ENCODE measurements at regions of chr1 and their contacts with region 1.

Region 1: DNA sequence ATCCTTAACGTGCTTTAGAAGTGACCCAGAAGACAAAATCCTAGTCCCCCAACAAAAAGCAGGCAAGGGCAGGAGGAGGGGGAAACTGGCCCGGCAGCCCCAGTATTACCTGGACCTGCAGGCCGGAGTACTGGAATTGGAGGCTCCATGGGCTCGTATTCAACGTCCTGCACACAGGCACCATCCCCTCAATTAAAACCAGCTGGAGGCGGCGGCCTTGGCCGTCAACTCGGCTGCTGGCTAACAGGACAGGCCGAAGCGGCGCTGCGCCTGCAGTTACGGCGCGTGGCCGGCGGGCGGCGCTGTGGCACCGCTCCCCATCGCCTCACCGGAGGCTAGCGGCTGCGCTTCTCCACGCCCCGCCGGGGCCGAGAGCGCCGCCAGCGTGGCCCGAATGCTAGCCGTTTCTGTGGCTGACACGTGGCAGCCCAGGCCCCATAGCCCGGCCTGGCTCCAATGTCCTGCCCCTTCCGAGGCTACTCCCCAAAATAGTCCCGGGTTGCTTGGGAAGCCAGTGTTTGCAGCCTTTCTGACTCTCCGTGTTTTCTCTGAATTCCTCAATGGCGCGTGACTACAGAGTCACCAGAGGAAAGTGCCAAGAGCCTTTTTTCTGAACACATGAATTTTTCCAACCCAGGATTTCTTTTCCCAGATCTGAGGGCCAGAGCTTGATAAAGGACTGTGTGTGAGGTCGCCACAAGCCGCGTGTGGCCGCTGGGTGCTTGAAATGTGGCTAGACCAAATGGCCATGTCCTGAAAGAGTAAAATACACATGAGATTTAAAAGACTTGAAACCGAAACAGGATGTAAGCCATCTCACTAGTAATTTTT is 82.5 kb downstream of the HHIPL2 start:
- DNase-seq: peak; percentile 84
- ATAC-seq: peak; percentile 96
- H3K4me3 Mint-ChIP-seq: peak overlapping the region; percentile 77
- H3K27ac Mint-ChIP-seq: peak overlapping the region; percentile 80
- H3K4me1 Mint-ChIP-seq: peaks cover 12% of the 10 kb centered on the region
- H3K27me3 Mint-ChIP-seq: peaks cover 9% of the 10 kb centered on the region

Region 2: GRCh38 chr1:222455188-222455879 is 10.1 kb before region 1 on chr1:
- CTCF ChIA-PET with region 1: interaction called, 13 read pairs
- DNase-seq: peak; percentile 83
- ATAC-seq: peak; percentile 96
- H3K4me3 Mint-ChIP-seq: no peak overlapping the region
- H3K27ac Mint-ChIP-seq: no peak overlapping the region
- H3K4me1 Mint-ChIP-seq: peaks cover 2% of the 10 kb centered on the region
- H3K27me3 Mint-ChIP-seq: peaks cover under 1% of the 10 kb centered on the region

Region 3: DNA sequence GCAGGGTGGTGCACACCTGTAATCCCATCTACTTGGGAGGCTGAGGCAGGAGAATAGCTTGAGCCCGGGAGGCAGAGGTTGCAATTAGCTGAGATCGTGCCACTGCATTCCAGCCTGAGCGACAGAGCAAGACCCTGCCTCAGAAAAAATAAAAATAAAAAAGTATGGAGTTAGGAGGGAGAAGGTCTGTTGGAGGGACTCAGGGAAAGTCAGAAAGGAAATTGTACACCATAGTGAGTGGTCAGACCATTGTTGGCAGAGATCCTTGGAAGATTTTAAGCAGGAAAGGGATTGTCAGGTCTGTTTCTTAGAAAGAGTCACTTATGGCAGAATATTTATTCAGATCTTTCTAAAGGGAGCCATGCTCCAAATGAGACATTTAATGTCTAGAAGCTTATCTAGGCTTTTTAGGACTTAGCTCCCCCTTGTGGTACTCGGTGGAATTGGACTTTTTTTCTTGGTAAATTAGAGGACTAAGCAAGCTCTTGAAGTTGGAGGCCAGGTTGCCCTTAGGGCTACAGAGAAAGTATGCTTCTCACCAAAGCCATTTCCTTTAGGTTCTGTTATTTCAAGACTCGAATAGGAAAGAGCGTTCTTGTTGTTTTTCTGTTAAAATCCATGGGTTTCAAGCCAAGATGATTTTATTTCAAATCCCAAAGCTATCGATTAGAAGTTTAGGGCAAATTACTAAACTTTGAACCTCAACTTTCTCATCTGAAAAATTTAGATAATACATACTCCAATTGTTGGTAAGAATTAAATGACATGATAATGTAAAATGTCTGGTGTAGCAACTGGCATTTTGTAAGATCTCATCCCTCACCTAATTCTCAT is 169.0 kb after region 1 on chr1:
- CTCF ChIA-PET with region 1: interaction called, 74 read pairs
- DNase-seq: peak; percentile 75
- ATAC-seq: peak; percentile 86
- H3K4me3 Mint-ChIP-seq: no peak overlapping the region
- H3K27ac Mint-ChIP-seq: peak overlapping the region; percentile 21
- H3K4me1 Mint-ChIP-seq: peaks cover 11% of the 10 kb centered on the region
- H3K27me3 Mint-ChIP-seq: no peaks in the 10 kb centered on the region

Region 4: GRCh38 chr1:222643938-222644635 is 178.7 kb after region 1 on chr1:
- CTCF ChIA-PET with region 1: interaction called, 19 read pairs
- DNase-seq: peak; percentile 99
- ATAC-seq: peak; percentile 99
- H3K4me3 Mint-ChIP-seq: peak overlapping the region; percentile 99
- H3K27ac Mint-ChIP-seq: peak overlapping the region; percentile 100
- H3K4me1 Mint-ChIP-seq: peaks cover 18% of the 10 kb centered on the region
- H3K27me3 Mint-ChIP-seq: no peaks in the 10 kb centered on the region

Region 5: DNA sequence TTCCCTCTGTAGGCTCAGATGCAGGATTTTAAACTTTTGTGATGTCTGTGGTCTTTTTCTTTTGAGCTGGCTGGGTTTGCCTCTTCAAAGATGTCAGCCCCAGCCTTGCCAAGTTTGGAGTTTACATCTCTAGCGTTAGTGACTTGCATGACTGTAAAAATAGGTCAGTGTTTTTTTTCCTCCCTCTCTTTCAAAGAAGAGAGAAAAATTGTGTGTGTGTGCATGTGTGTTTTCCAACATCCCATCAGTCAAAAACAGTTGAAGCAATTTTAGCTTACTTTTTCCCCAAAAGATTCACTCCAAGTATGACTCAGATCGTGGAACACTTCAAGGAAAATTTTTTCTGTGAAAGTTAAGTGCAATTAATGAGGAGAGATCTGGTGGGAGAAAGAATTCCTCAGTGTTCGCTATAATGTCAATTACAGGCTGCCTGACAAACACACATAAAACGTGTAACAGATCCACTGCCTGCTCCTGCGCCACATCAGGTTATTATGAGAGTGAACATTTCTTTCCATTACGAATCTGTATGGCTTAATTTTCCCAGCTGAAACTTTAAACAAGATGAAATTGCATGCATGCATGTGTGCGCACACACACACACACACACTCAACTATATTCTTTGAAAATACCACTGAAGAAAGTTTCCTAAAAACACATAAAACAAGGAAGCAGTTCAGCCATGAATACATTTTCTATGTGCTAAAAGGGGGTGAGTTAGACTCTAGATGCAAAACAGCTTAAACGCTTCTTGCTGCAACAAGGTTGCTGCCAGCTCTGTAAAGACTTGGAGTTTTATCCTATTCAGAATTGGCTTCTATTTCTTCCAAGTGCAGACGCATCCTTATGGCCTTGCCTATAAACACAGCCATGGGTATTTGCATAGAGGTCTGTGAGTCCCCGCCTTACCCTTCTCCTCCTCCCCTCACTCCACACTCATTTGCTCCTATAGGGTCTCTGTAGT is 622.1 kb after region 1 on chr1:
- CTCF ChIA-PET with region 1: interaction called, 10 read pairs
- DNase-seq: no peak
- ATAC-seq: no peak
- H3K4me3 Mint-ChIP-seq: no peak overlapping the region
- H3K27ac Mint-ChIP-seq: no peak overlapping the region
- H3K4me1 Mint-ChIP-seq: no peaks in the 10 kb centered on the region
- H3K27me3 Mint-ChIP-seq: peaks cover 8% of the 10 kb centered on the region